ENCODE measurements at regions of chr16 and their contacts with region 1.

Region 1: DNA sequence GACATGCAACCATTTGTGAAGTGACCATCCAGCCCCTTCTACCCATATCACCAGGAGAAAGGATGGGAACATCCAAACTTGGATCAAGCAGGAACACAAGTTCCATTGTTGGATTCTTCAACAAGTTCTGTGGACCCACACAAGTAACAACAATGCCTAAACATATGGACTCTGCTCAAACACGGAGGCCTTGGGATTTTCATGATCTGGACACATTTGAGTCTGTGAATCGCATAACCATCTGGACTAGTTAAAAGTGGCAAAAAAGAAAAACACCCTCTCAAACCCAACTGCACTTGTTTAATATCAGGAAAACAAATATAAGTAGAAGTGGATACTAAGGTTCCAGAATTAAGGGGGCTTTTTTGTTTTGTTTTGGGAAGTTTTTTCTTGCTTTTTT is 70.8 kb downstream of the TOX3 start:
- DNase-seq: no peak
- H3K4me3 ChIP-seq: no peak overlapping the region
- H3K27ac ChIP-seq: no peak overlapping the region
- H3K4me1 ChIP-seq: no peaks in the 10 kb centered on the region
- H3K27me3 ChIP-seq: no peaks in the 10 kb centered on the region
- CTCF ChIP-seq: no peak

Region 2: GRCh38 chr16:52422307-52422706 is 53.8 kb before region 1 on chr16:
- CTCF ChIA-PET with region 1: no interaction called
- dilution Hi-C with region 1: loop called (anchors 5 kb)
- in situ Hi-C with region 1: no loop called
- intact Hi-C with region 1: no loop called
- DNase-seq: no peak
- H3K4me3 ChIP-seq: no peak overlapping the region
- H3K27ac ChIP-seq: no peak overlapping the region
- H3K4me1 ChIP-seq: no peaks in the 10 kb centered on the region
- H3K27me3 ChIP-seq: no peaks in the 10 kb centered on the region
- CTCF ChIP-seq: no peak

Region 3: GRCh38 chr16:52613508-52613907 is 137.4 kb after region 1 on chr16:
- CTCF ChIA-PET with region 1: no interaction called
- dilution Hi-C with region 1: no loop called
- in situ Hi-C with region 1: no loop called
- intact Hi-C with region 1: no loop called
- DNase-seq: no peak
- H3K4me3 ChIP-seq: no peak overlapping the region
- H3K27ac ChIP-seq: no peak overlapping the region
- H3K4me1 ChIP-seq: no peaks in the 10 kb centered on the region
- H3K27me3 ChIP-seq: no peaks in the 10 kb centered on the region
- CTCF ChIP-seq: no peak

Measured in mammary epithelial cell (primary cell).